A549 (cell line): ENCODE measurements at regions of chr10 and their contacts with region 1.

Region 1: DNA sequence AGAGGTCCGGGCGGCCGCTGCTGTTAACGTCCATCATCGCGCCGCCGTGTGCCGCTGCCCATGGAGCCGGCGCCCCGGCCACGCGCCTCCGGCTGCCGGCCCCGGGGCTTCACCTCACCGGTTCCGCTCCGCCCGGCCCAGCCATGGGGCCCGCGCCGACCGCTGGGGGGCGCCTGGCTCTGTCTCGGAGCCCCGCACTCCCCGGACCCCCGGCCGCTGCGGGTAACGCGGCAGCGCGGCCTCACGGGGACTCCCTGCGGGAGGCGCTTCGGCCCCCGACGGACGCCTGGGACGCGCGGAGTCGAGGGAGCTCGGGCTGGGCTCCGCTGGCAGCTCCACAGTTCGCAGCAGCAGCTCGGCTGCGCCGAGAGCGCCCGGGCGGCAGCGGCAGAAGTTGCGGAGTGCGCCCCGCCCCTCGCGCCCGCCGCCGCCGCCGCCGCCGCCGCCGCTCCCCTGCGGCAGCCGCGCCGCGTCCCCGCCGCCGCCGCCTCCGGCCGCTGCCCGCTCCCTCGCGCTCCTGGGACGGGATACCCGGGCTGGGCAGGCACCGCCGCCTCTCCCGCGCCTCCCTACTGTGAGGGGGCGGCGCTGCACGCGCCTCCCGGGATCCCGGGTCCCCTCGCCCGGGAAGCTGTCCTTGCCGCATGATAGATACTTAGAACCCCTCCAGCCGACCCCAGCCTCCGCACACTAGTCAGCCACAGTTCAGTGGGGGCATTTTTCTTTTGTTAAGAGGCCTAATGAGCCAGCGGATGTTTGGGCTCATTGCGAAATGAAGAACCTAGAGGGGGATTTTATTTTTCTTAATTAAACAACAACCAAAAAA is at the start of gene HTR7:
- DNase-seq: peak; percentile 46 to 69
- ATAC-seq: peak; percentile 86 to 97
- H3K4me3 ChIP-seq: peak within 1 kb of the TSS; percentile 54
- H3K27ac ChIP-seq: peak within 1 kb of the TSS; percentile 21 to 85; a peak in 4 of 6 replicates
- H3K4me1 ChIP-seq: peaks cover 11% of the 10 kb centered on the region; the same call in 2 of the 3 replicates
- CTCF ChIP-seq: peak; percentile 85
- EP300 ChIP-seq: no peak
- POLR2A ChIP-seq: no peak
- RAD21 ChIP-seq: no peak
- polyA plus RNA-seq, gene HTR7: 0.04 TPM in 2 replicates

Region 2: GRCh38 chr10:90871766-90872647 is 14.2 kb after region 1 on chr10 and contains the start of gene RPP30:
- CTCF ChIA-PET with region 1: interaction called, 13 read pairs
- POLR2A ChIA-PET with region 1: no interaction called
- DNase-seq: peak; percentile 85 to 89
- ATAC-seq: peak; percentile 98 to 100
- H3K4me3 ChIP-seq: peak within 1 kb of the TSS; percentile 74
- H3K27ac ChIP-seq: peak within 1 kb of the TSS; percentile 75 to 90
- H3K4me1 ChIP-seq: peaks cover 7% of the 10 kb centered on the region; the same call in 2 of the 3 replicates
- CTCF ChIP-seq: no peak
- EP300 ChIP-seq: no peak
- POLR2A ChIP-seq: peak; percentile 73
- RAD21 ChIP-seq: no peak
- polyA plus RNA-seq, gene RPP30: 61.4 and 70.9 TPM in 2 replicates

Region 3: GRCh38 chr10:90993340-90993739 is 135.5 kb after region 1 on chr10:
- CTCF ChIA-PET with region 1: no interaction called
- POLR2A ChIA-PET with region 1: no interaction called
- DNase-seq: no peak
- ATAC-seq: no peak
- H3K4me3 ChIP-seq: no peak overlapping the region
- H3K27ac ChIP-seq: no peak overlapping the region
- H3K4me1 ChIP-seq: no peaks in the 10 kb centered on the region
- CTCF ChIP-seq: no peak
- EP300 ChIP-seq: no peak
- POLR2A ChIP-seq: no peak
- RAD21 ChIP-seq: no peak

Region 4: GRCh38 chr10:91006752-91007346 is 149.0 kb after region 1 on chr10:
- CTCF ChIA-PET with region 1: no interaction called
- POLR2A ChIA-PET with region 1: no interaction called
- DNase-seq: no peak
- ATAC-seq: no peak
- H3K4me3 ChIP-seq: no peak overlapping the region
- H3K27ac ChIP-seq: no peak overlapping the region; a peak in 1 of 6 replicates
- H3K4me1 ChIP-seq: peaks cover 11% of the 10 kb centered on the region
- CTCF ChIP-seq: no peak
- EP300 ChIP-seq: no peak
- POLR2A ChIP-seq: no peak
- RAD21 ChIP-seq: no peak